Panc1 (cell line): ENCODE measurements at regions of chr5 and their contacts with region 1.

Region 1: DNA sequence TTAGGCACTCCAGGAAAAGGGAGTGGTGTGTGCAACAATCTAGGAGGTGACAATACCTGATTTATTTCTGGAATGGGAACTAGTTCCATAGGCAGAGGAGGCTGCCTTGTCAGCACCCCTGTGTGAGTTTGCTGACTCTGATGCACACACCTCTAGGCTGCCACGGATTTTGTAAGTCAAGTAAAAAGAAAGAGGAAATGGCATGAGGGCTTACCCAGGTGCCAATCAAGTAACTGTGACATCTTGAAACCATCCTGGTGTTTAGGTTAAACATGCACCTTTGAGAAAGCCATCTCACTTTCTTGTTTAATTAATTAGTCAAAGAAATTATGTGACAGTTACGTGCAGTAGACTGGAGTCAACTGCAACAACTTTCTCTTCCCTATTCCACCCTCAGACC is 32.3 kb upstream of the FAM81B start:
- DNase-seq: no peak
- ATAC-seq: no peak
- H3K4me3 ChIP-seq: no peak overlapping the region
- H3K27ac ChIP-seq: no peak overlapping the region
- H3K4me1 ChIP-seq: no peaks in the 10 kb centered on the region
- H3K27me3 ChIP-seq: peaks cover 4% of the 10 kb centered on the region; the same call in 1 of the 2 replicates
- CTCF ChIP-seq: no peak

Region 2: GRCh38 chr5:95327211-95327610 is 31.6 kb before region 1 on chr5:
- CTCF ChIA-PET with region 1: no interaction called
- POLR2A ChIA-PET with region 1: no interaction called
- in situ Hi-C with region 1: no loop called
- intact Hi-C with region 1: loop called (anchors 1 kb)
- DNase-seq: no peak
- ATAC-seq: no peak
- H3K4me3 ChIP-seq: no peak overlapping the region
- H3K27ac ChIP-seq: no peak overlapping the region
- H3K4me1 ChIP-seq: no peaks in the 10 kb centered on the region
- H3K27me3 ChIP-seq: peaks cover 2% of the 10 kb centered on the region; the same call in 1 of the 2 replicates
- CTCF ChIP-seq: no peak